ENCODE measurements at regions of chr12 and their contacts with region 1.

Region 1: DNA sequence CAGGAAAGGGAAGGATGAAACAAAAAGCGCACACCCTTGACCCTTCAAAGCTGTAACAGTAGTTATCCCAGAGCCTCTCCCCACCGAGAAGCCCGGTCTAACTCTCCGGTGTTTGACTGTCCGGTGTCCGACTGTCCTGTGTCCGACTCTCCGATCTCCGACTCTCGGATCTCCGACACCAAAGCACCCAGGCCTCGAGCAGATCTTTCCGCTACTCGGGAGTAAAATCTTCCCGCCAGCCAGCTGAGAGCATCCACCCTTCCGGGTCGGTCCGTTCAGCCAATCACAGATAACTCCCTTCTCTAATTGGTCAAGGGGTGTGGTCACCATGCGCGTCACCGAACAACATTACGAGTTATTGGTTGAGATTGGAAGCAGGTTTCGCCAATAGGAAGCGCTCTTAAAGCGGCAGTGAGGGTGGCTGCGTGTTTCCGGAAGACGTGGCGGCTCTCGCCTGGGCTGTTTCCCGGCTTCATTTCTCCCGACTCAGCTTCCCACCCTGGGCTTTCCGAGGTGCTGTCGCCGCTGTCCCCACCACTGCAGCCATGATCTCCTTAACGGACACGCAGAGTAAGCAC is at the starts of genes GOLT1B and RECQL:
- DNase-seq: peak; percentile 67 to 96 (median 94)
- ATAC-seq: peak; percentile 98
- H3K4me3 ChIP-seq: peak within 1 kb of the TSS; percentile 68
- H3K4me3 Mint-ChIP-seq: no peak within 1 kb of the TSS
- H3K27ac ChIP-seq: peak within 1 kb of the TSS; percentile 87
- H3K27ac Mint-ChIP-seq: no peak within 1 kb of the TSS
- H3K4me1 ChIP-seq: peaks cover 20 to 25% of the 10 kb centered on the region in 2 donors
- H3K4me1 Mint-ChIP-seq: peaks cover 30 to 67% (median 55%) of the 10 kb centered on the region in 7 donors
- H3K27me3 ChIP-seq: no peaks in the 10 kb centered on the region
- H3K27me3 Mint-ChIP-seq: no peaks in the 10 kb centered on the region
- total RNA-seq, gene GOLT1B: 25.8 to 42.5 (median 31.7) TPM
- total RNA-seq, gene RECQL: 19.4 to 77.7 (median 43.2) TPM

Region 2: GRCh38 chr12:21296751-21297406 is 204.6 kb before region 1 on chr12:
- CTCF ChIA-PET with region 1: no interaction called
- POLR2A ChIA-PET with region 1: no interaction called
- intact Hi-C with region 1: loop called in 1 of 2 experiments (anchors 2 kb)
- DNase-seq: peak in 4 of 9 donors; percentile 4 to 14 (median 8)
- ATAC-seq: peak; percentile 38
- H3K4me3 ChIP-seq: no peak overlapping the region
- H3K4me3 Mint-ChIP-seq: no peak overlapping the region
- H3K27ac ChIP-seq: no peak overlapping the region
- H3K27ac Mint-ChIP-seq: no peak overlapping the region
- H3K4me1 ChIP-seq: no peaks in the 10 kb centered on the region
- H3K4me1 Mint-ChIP-seq: peaks cover 0 to 4% (median 0%) of the 10 kb centered on the region in 7 donors
- H3K27me3 ChIP-seq: no peaks in the 10 kb centered on the region
- H3K27me3 Mint-ChIP-seq: peaks cover 4 to 13% (median 6%) of the 10 kb centered on the region in 5 donors

Region 3: DNA sequence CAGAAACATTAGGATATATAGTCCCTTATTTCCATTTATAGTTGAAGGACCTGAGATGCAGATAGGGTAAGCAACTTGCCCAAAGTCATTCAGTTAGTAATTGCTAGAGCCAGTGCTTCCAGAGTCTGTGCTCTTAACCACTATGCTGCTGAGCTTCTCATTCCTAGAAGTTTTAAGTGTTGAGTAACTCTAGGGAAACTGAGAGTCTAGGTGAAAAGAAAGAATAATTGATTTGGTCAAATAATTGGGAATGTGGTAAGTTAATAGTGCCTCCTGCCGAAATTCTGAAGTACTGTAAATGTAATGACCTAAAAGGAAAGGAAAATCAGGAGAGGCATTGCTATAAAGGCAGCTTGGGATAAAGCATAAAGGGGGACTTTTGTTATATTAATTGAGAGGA is 49.9 kb before region 1 on chr12:
- CTCF ChIA-PET with region 1: no interaction called
- POLR2A ChIA-PET with region 1: interaction called, 4 read pairs
- intact Hi-C with region 1: loop called (anchors 1 kb)
- DNase-seq: no peak
- ATAC-seq: no peak
- H3K4me3 ChIP-seq: no peak overlapping the region
- H3K4me3 Mint-ChIP-seq: no peak overlapping the region
- H3K27ac ChIP-seq: no peak overlapping the region
- H3K27ac Mint-ChIP-seq: peak overlapping the region in 4 of 9 donors; percentile 6 to 51 (median 28)
- H3K4me1 ChIP-seq: peaks cover 2 to 21% of the 10 kb centered on the region in 2 donors
- H3K4me1 Mint-ChIP-seq: peaks cover 2 to 48% (median 29%) of the 10 kb centered on the region in 7 donors
- H3K27me3 ChIP-seq: no peaks in the 10 kb centered on the region
- H3K27me3 Mint-ChIP-seq: no peaks in the 10 kb centered on the region

Region 4: DNA sequence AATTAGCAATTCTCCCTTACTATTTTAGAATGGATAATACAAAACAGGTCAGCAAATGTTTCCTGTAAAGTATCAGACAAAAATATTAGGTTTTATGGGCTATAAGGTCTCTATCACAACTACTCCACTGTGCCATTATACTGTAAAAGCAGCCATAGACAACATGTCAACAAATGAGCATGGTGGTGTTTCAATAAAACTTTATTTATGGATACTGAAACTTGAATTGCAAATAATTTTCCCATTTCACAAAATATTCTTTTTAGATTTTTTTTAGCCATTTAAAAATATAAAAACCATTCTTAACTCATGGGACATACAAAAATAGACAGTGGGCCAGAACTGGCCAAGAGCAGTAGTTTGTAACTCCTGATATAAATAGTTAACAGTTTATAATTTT is 15.5 kb before region 1 on chr12:
- CTCF ChIA-PET with region 1: no interaction called
- POLR2A ChIA-PET with region 1: interaction called, 5 read pairs
- intact Hi-C with region 1: loop called in 1 of 2 experiments (anchors 2 kb)
- DNase-seq: no peak
- ATAC-seq: no peak
- H3K4me3 ChIP-seq: no peak overlapping the region
- H3K4me3 Mint-ChIP-seq: no peak overlapping the region
- H3K27ac ChIP-seq: no peak overlapping the region
- H3K27ac Mint-ChIP-seq: no peak overlapping the region
- H3K4me1 ChIP-seq: no peaks in the 10 kb centered on the region
- H3K4me1 Mint-ChIP-seq: peaks cover 0 to 18% (median 10%) of the 10 kb centered on the region in 7 donors
- H3K27me3 ChIP-seq: no peaks in the 10 kb centered on the region
- H3K27me3 Mint-ChIP-seq: no peaks in the 10 kb centered on the region

Region 5: DNA sequence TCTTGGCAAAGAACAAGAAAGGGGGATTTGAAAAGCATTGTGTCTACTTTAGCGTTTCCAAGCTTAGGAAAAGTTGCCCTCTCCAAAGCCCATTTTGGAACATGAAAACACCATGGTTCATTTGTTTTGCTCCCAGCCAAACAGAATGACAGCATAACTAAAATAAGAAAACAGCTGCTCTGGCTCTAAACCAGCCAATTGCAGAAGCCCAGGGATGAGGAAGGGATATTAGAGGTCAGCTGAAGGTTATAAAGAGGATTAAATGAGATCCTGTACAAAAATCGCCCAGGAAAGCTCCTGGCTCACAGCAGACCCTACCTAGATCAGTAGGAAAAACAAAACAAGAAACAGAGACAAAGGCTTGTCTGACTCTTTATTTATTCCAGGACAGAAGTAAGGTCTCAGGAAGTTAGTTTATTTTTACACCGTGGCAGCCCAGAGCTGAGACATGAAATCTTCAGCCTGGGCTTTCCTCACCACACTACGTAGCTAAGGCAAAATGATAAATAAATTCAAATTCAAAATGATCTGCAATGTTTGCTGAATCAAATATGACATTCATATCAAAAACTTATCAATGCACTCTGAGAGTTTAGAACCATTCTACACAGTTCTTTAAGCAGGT is 50.5 kb after region 1 on chr12:
- CTCF ChIA-PET with region 1: no interaction called
- POLR2A ChIA-PET with region 1: no interaction called
- intact Hi-C with region 1: no loop called
- DNase-seq: no peak
- ATAC-seq: no peak
- H3K4me3 ChIP-seq: no peak overlapping the region
- H3K4me3 Mint-ChIP-seq: no peak overlapping the region
- H3K27ac ChIP-seq: no peak overlapping the region
- H3K27ac Mint-ChIP-seq: no peak overlapping the region
- H3K4me1 ChIP-seq: no peaks in the 10 kb centered on the region
- H3K4me1 Mint-ChIP-seq: peaks cover 0 to 7% (median 0%) of the 10 kb centered on the region in 7 donors
- H3K27me3 ChIP-seq: no peaks in the 10 kb centered on the region
- H3K27me3 Mint-ChIP-seq: peaks cover 0 to 4% (median 0%) of the 10 kb centered on the region in 5 donors

Region 6: GRCh38 chr12:21613931-21614330 is 112.5 kb after region 1 on chr12:
- CTCF ChIA-PET with region 1: no interaction called
- POLR2A ChIA-PET with region 1: interaction called, 3 read pairs
- intact Hi-C with region 1: loop called (anchors 2 kb)
- DNase-seq: no peak
- ATAC-seq: no peak
- H3K4me3 ChIP-seq: no peak overlapping the region
- H3K4me3 Mint-ChIP-seq: peak overlapping the region in 8 of 10 donors; percentile 36 to 82 (median 64)
- H3K27ac ChIP-seq: peak overlapping the region; percentile 61
- H3K27ac Mint-ChIP-seq: peak overlapping the region in 8 of 9 donors; percentile 84 to 98 (median 94)
- H3K4me1 ChIP-seq: peaks cover 25 to 46% of the 10 kb centered on the region in 2 donors
- H3K4me1 Mint-ChIP-seq: peaks cover 35 to 69% (median 60%) of the 10 kb centered on the region in 7 donors
- H3K27me3 ChIP-seq: no peaks in the 10 kb centered on the region
- H3K27me3 Mint-ChIP-seq: no peaks in the 10 kb centered on the region

Region 7: DNA sequence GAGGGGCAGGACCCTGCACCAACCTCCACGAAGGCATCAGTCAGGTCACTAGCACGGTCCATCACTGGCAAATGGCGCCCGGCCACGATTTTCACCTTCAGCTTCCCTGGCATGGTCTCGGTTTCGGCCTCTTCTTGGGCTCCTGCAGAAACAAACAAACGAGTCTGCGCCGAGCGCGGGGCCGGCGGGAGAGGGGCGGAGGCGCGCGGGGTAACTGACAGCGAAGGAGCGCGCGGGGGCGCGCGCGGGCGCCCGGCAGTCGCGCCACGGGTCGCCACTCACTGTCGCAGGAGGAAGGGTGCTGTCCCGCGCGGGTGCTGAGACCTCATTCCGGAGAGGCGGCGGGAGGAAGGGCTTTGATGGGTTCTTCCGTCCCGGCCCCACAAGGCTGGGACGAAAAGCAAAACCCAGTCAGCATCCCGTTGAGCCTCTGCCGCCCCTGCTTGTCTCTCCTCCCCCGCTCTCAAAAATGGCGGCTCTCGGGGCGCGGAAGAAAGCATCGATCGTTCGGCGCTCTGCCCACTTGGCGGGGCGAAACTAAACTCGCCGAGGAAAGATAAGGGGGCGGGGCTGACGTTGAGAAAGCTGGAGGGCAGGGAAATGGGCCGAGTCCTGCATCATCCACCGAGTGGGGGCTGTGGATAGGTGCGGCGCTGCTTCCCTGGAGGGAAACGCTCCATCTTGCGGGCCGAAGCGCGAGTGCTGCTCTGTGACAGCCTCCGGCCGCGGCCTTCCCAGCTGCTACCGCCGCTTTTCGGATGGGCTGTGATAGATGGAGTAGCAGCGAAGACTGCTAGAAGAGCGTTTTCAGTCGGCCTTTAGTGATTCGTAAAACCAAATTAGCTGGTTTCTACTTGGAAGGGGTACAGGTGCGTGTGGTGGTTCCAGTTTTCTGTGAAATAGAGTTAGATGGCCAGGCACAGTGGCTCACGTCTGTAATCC is 1042.8 kb after region 1 on chr12 and contains the start of gene C2CD5:
- CTCF ChIA-PET with region 1: no interaction called
- POLR2A ChIA-PET with region 1: interaction called, 3 read pairs
- intact Hi-C with region 1: loop called (anchors 1 kb)
- DNase-seq: peak; percentile 84 to 96 (median 96)
- ATAC-seq: peak; percentile 96
- H3K4me3 ChIP-seq: peak within 1 kb of the TSS; percentile 95
- H3K4me3 Mint-ChIP-seq: peak within 1 kb of the TSS; percentile 91 to 98 (median 92)
- H3K27ac ChIP-seq: peak within 1 kb of the TSS; percentile 79
- H3K27ac Mint-ChIP-seq: peak within 1 kb of the TSS; percentile 94 to 98 (median 95)
- H3K4me1 ChIP-seq: peaks cover 7 to 18% of the 10 kb centered on the region in 2 donors
- H3K4me1 Mint-ChIP-seq: peaks cover 32 to 47% (median 38%) of the 10 kb centered on the region in 7 donors
- H3K27me3 ChIP-seq: no peaks in the 10 kb centered on the region
- H3K27me3 Mint-ChIP-seq: peaks cover 0 to 12% (median 4%) of the 10 kb centered on the region in 5 donors
- total RNA-seq, gene C2CD5: 31.5 to 58.9 (median 47.1) TPM

Measured in naive thymus-derived CD4-positive, alpha-beta T cell (primary cell).